ENCODE measurements at regions of chr17 and their contacts with region 1.

Region 1: GRCh38 chr17:69327060-69327831 is at the start of gene ABCA5:
- DNase-seq: peak; percentile 93
- ATAC-seq: peak; percentile 94 to 97
- H3K4me3 ChIP-seq: peak within 1 kb of the TSS; percentile 76
- H3K27ac ChIP-seq: peak within 1 kb of the TSS; percentile 84 to 92
- H3K4me1 ChIP-seq: peaks cover 6% of the 10 kb centered on the region; the same call in 2 of the 3 replicates
- CTCF ChIP-seq: no peak; the same call in 2 of the 3 replicates
- EP300 ChIP-seq: no peak
- POLR2A ChIP-seq: peak; percentile 90
- RAD21 ChIP-seq: no peak; a peak in 1 of 5 replicates
- polyA plus RNA-seq, gene ABCA5: 6.9 and 9.1 TPM in 2 replicates

Region 2: GRCh38 chr17:69300222-69300621 is 27.0 kb before region 1 on chr17:
- CTCF ChIA-PET with region 1: no interaction called
- POLR2A ChIA-PET with region 1: no interaction called
- DNase-seq: no peak
- ATAC-seq: no peak; a peak in 1 of 6 replicates
- H3K4me3 ChIP-seq: no peak overlapping the region
- H3K27ac ChIP-seq: no peak overlapping the region
- H3K4me1 ChIP-seq: no peaks in the 10 kb centered on the region
- CTCF ChIP-seq: no peak
- EP300 ChIP-seq: no peak
- POLR2A ChIP-seq: no peak
- RAD21 ChIP-seq: no peak

Region 3: DNA sequence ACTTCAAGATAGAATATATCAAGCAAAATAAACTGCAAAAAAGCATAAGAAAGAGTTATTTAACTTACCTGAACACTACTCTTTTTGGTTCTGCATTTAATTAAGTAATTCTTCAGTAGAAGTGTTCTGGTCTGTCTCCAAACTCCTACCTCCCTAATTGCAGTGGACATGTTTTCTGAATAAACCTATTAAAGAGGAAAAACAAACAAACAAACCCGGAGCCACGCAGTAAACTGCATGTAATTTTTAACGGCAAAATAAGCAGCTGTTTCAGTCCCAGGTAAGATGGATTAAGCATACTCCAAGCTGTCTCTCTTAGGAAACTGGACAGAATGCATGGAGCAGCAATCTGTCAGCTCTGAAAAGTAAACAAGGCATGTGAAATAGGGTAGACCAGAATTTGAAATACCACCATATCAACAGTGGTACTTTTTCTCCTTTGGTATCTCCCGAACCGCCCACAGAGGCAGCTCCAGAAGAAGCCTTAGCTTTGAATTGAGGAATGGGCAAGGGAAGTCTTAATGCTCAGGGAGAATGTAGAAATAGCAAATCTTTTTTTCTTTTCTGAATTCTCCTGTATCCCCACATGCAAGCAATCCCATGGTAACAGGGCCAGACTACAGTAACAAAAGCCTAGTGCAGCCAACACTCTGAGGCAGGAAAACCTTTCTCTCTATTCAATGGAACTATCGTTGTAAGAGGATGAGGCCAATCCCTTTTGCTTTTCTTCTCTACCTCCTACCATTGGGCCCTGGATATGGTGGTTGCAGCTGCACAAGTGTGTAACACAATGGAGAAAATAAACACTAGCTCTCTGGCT is 12.8 kb before region 1 on chr17:
- CTCF ChIA-PET with region 1: interaction called, 7 read pairs
- POLR2A ChIA-PET with region 1: interaction called, 12 read pairs
- DNase-seq: no peak
- ATAC-seq: peak; percentile 24 to 30; a peak in 3 of 6 replicates
- H3K4me3 ChIP-seq: no peak overlapping the region
- H3K27ac ChIP-seq: no peak overlapping the region
- H3K4me1 ChIP-seq: peaks cover 11% of the 10 kb centered on the region
- CTCF ChIP-seq: no peak
- EP300 ChIP-seq: no peak
- POLR2A ChIP-seq: no peak
- RAD21 ChIP-seq: no peak

Region 4: GRCh38 chr17:69414408-69415274 is 87.4 kb after region 1 on chr17 and contains the start of gene MAP2K6:
- CTCF ChIA-PET with region 1: no interaction called
- POLR2A ChIA-PET with region 1: interaction called, 12 read pairs
- DNase-seq: peak; percentile 85 to 90
- ATAC-seq: peak; percentile 98 to 100
- H3K4me3 ChIP-seq: peak within 1 kb of the TSS; percentile 54
- H3K27ac ChIP-seq: peak within 1 kb of the TSS; percentile 76 to 89
- H3K4me1 ChIP-seq: peaks cover 33% of the 10 kb centered on the region
- CTCF ChIP-seq: no peak
- EP300 ChIP-seq: no peak
- POLR2A ChIP-seq: peak; percentile 68
- RAD21 ChIP-seq: peak in 1 of 2 experiments; percentile 9; a peak in 1 of 5 replicates
- polyA plus RNA-seq, gene MAP2K6: 20.1 and 20.2 TPM in 2 replicates

Measured in A549 (cell line).